HCT116 (cell line): ENCODE measurements at regions of chr7 and their contacts with region 1.

Region 1: DNA sequence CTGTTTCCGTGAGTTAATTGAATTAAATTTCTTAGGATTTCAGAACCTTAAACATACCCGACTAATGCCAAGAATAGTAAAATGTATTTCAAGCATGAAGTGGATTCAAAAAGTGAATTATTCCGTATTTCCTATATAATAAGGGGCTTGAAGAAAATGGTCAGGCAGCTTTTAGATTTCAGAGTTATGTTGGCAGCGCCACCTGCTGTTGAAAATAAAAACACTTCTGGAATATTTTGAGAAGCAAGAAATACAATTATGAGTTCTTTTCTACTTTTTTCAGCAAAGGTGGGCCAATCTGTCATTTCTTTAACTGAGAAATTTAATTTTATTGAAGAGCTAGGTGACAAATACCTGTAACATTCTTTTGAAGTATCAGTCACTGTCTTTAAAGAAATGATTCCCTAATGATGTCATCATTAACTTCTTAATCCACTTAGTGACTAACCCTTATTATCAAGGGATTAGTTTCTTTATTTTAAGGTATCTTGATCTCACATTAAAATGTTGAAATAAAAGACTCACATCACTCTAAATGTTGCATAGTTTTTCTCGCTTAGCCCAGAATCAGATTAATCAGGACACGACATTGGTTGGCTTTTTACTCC is 36.6 kb upstream of the AGR3 start:
- DNase-seq: peak; percentile 33
- ATAC-seq: no peak
- H3K4me3 ChIP-seq: no peak overlapping the region
- H3K27ac ChIP-seq: no peak overlapping the region
- H3K4me1 ChIP-seq: peaks cover 0 to 22% of the 10 kb centered on the region in 2 experiments; a peak in 2 of 4 replicates
- H3K27me3 ChIP-seq: no peaks in the 10 kb centered on the region
- CTCF ChIP-seq: peak; percentile 50 to 80 (median 76)
- POLR2A ChIP-seq: no peak
- RAD21 ChIP-seq: peak; percentile 77

Region 2: DNA sequence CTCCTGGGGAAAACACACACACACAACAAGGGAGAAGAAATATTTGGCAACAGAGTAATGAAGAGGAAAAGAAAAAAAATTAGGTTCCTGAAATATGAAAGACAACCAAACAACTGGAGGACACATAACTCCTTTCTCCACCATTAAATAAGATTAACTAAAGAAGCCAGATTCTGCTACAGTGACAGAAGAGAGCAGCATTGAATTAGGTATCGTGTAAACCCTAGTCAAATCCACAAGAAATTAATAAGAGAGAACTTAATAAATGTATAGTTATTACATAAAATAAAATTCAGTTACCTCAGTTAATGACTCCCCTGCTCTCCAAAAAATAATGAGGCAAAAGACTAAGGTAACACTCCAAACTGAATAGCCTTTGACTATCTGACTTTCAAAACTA is 803.8 kb before region 1 on chr7:
- CTCF ChIA-PET with region 1: no interaction called
- POLR2A ChIA-PET with region 1: no interaction called
- RAD21 ChIA-PET with region 1: no interaction called
- intact Hi-C with region 1: loop called (anchors 1 kb)
- DNase-seq: peak; percentile 52
- ATAC-seq: peak; percentile 59; the same call in 1 of the 2 replicates
- H3K4me3 ChIP-seq: no peak overlapping the region
- H3K27ac ChIP-seq: no peak overlapping the region
- H3K4me1 ChIP-seq: no peaks in the 10 kb centered on the region
- H3K27me3 ChIP-seq: no peaks in the 10 kb centered on the region
- CTCF ChIP-seq: peak; percentile 24 to 54 (median 54); a peak in 4 of 6 replicates
- POLR2A ChIP-seq: no peak
- RAD21 ChIP-seq: peak; percentile 88

Region 3: GRCh38 chr7:16431646-16432424 is 486.6 kb before region 1 on chr7:
- CTCF ChIA-PET with region 1: no interaction called
- POLR2A ChIA-PET with region 1: no interaction called
- RAD21 ChIA-PET with region 1: no interaction called
- intact Hi-C with region 1: loop called (anchors 5 kb)
- DNase-seq: peak; percentile 54
- ATAC-seq: peak; percentile 96
- H3K4me3 ChIP-seq: no peak overlapping the region
- H3K27ac ChIP-seq: no peak overlapping the region
- H3K4me1 ChIP-seq: peaks cover 0 to 6% of the 10 kb centered on the region in 2 experiments; a peak in 2 of 4 replicates
- H3K27me3 ChIP-seq: no peaks in the 10 kb centered on the region
- CTCF ChIP-seq: peak; percentile 51 to 86 (median 72)
- POLR2A ChIP-seq: no peak
- RAD21 ChIP-seq: peak; percentile 79

Region 4: DNA sequence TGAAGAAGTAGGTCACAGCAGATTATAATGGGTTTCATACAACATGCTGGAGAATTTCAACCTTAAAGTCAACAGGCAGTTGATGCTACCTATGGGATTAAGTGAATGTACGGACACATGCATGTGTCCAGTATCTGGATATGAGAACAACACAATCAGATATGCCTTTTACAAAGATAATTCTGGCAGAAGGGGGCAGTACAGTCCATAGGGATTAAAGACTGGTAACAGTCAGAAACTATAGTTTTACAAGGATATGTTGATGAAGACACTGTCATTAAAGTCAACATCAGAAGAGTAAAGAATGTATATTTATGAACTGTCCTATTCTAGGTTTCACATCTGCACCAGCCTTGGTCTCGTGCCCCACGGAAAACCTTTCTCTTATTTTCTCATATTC is 314.3 kb before region 1 on chr7:
- CTCF ChIA-PET with region 1: no interaction called
- POLR2A ChIA-PET with region 1: no interaction called
- RAD21 ChIA-PET with region 1: no interaction called
- intact Hi-C with region 1: loop called (anchors 1 kb)
- DNase-seq: no peak
- ATAC-seq: 0 out of 2 replicates have a peak, but pooled peaks have one; percentile 47
- H3K4me3 ChIP-seq: no peak overlapping the region
- H3K27ac ChIP-seq: no peak overlapping the region
- H3K4me1 ChIP-seq: no peaks in the 10 kb centered on the region
- H3K27me3 ChIP-seq: no peaks in the 10 kb centered on the region
- CTCF ChIP-seq: peak; percentile 16 to 33 (median 19); a peak in 3 of 6 replicates
- POLR2A ChIP-seq: no peak
- RAD21 ChIP-seq: peak; percentile 49

Region 5: GRCh38 chr7:16695621-16696237 is 222.7 kb before region 1 on chr7:
- CTCF ChIA-PET with region 1: interaction called, 7 read pairs
- POLR2A ChIA-PET with region 1: no interaction called
- RAD21 ChIA-PET with region 1: no interaction called
- intact Hi-C with region 1: loop called (anchors 1 kb)
- DNase-seq: peak; percentile 48
- ATAC-seq: peak; percentile 86
- H3K4me3 ChIP-seq: no peak overlapping the region
- H3K27ac ChIP-seq: no peak overlapping the region
- H3K4me1 ChIP-seq: no peaks in the 10 kb centered on the region
- H3K27me3 ChIP-seq: no peaks in the 10 kb centered on the region
- CTCF ChIP-seq: peak; percentile 46 to 65 (median 60); a peak in 5 of 6 replicates
- POLR2A ChIP-seq: no peak
- RAD21 ChIP-seq: peak; percentile 65

Region 6: DNA sequence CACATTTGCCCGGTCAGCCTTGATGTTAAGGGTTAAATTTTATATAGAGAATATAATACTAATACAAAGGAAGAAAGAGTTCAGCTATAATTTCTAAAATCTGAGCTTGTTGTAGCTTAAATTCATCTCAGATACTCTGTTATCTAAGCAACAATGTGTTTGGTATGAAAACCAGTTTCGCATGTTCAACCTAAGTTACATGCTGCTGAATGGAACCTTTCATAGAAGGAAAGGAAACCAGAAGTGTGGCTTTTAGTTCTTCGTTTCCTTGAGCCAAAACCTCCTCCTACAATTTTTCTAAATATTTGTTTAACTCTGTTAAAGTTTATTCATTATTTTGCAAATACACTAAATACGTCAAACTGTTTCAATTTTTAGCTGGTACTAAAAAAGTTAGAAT is 132.1 kb before region 1 on chr7:
- CTCF ChIA-PET with region 1: no interaction called
- POLR2A ChIA-PET with region 1: no interaction called
- RAD21 ChIA-PET with region 1: no interaction called
- intact Hi-C with region 1: no loop called
- DNase-seq: no peak
- ATAC-seq: no peak
- H3K4me3 ChIP-seq: no peak overlapping the region
- H3K27ac ChIP-seq: no peak overlapping the region
- H3K4me1 ChIP-seq: no peaks in the 10 kb centered on the region
- H3K27me3 ChIP-seq: no peaks in the 10 kb centered on the region
- CTCF ChIP-seq: no peak
- POLR2A ChIP-seq: no peak
- RAD21 ChIP-seq: no peak

Region 7: DNA sequence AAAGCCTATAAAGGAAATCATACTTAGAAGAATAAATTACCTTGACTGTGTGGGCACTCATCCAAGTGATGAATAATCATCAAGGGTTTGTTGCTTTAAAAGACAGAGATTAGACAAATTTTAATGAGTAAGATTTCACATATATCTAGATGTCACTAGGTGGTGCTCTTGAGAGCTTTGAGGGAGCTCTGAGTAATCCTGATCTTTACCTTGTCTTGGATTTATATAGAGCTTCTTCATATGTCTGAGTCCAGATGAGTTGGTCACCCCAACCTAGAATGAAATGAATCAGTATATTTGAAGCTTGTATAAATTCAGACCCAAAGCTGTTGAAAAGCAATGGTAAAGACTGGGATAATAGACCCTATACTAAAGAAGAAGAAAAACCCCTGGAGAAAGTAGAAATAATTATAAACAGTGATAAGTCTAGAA is 117.3 kb before region 1 on chr7:
- CTCF ChIA-PET with region 1: interaction called, 16 read pairs
- POLR2A ChIA-PET with region 1: no interaction called
- RAD21 ChIA-PET with region 1: interaction called, 4 to 6 read pairs
- intact Hi-C with region 1: loop called (anchors 1 kb)
- DNase-seq: peak; percentile 39
- ATAC-seq: peak; percentile 85
- H3K4me3 ChIP-seq: no peak overlapping the region
- H3K27ac ChIP-seq: no peak overlapping the region
- H3K4me1 ChIP-seq: no peaks in the 10 kb centered on the region
- H3K27me3 ChIP-seq: no peaks in the 10 kb centered on the region
- CTCF ChIP-seq: peak; percentile 33 to 69 (median 53); a peak in 5 of 6 replicates
- POLR2A ChIP-seq: no peak
- RAD21 ChIP-seq: peak; percentile 61

Region 8: DNA sequence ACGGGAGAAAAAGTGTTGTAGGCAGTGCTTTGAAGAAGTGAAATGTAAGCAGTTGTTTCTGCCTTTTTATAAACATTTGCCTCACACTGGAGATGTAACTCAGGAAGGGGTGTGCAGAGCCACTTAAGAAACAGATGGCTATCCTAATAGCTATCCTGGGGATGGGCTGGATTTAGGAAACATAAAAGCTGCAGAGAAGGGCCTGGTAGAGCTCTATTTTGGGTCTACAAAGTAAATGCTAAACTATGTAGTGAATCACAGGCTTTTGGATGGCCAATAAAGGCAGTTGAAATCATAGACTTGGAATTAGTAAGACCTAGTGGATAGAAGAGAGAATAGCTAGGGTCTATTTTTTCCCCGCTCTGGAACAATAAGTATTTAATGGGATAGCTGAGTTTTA is 43.2 kb after region 1 on chr7:
- CTCF ChIA-PET with region 1: no interaction called
- POLR2A ChIA-PET with region 1: no interaction called
- RAD21 ChIA-PET with region 1: no interaction called
- intact Hi-C with region 1: no loop called
- DNase-seq: no peak
- ATAC-seq: no peak
- H3K4me3 ChIP-seq: no peak overlapping the region
- H3K27ac ChIP-seq: no peak overlapping the region
- H3K4me1 ChIP-seq: no peaks in the 10 kb centered on the region; a peak in 1 of 4 replicates
- H3K27me3 ChIP-seq: no peaks in the 10 kb centered on the region
- CTCF ChIP-seq: no peak
- POLR2A ChIP-seq: no peak
- RAD21 ChIP-seq: no peak

Region 9: GRCh38 chr7:17118412-17118811 is 200.0 kb after region 1 on chr7:
- CTCF ChIA-PET with region 1: no interaction called
- POLR2A ChIA-PET with region 1: no interaction called
- RAD21 ChIA-PET with region 1: no interaction called
- intact Hi-C with region 1: no loop called
- DNase-seq: no peak
- ATAC-seq: no peak
- H3K4me3 ChIP-seq: no peak overlapping the region
- H3K27ac ChIP-seq: no peak overlapping the region
- H3K4me1 ChIP-seq: no peaks in the 10 kb centered on the region
- H3K27me3 ChIP-seq: no peaks in the 10 kb centered on the region
- CTCF ChIP-seq: no peak
- POLR2A ChIP-seq: no peak
- RAD21 ChIP-seq: no peak

Region 10: GRCh38 chr7:17205910-17206905 is 287.8 kb after region 1 on chr7:
- CTCF ChIA-PET with region 1: no interaction called
- POLR2A ChIA-PET with region 1: no interaction called
- RAD21 ChIA-PET with region 1: no interaction called
- intact Hi-C with region 1: no loop called
- DNase-seq: no peak
- ATAC-seq: no peak
- H3K4me3 ChIP-seq: no peak overlapping the region
- H3K27ac ChIP-seq: no peak overlapping the region
- H3K4me1 ChIP-seq: peaks cover 0 to 2% of the 10 kb centered on the region in 2 experiments; a peak in 2 of 4 replicates
- H3K27me3 ChIP-seq: no peaks in the 10 kb centered on the region
- CTCF ChIP-seq: no peak
- POLR2A ChIP-seq: no peak
- RAD21 ChIP-seq: no peak